ENCODE measurements at regions of chr20 and their contacts with region 1.

Region 1: GRCh38 chr20:62907384-62908317 is 18.7 kb downstream of the DIDO1 start:
- DNase-seq: peak; percentile 59 to 71 (median 70)
- H3K4me3 ChIP-seq: no peak overlapping the region
- H3K27ac ChIP-seq: no peak overlapping the region
- H3K4me1 ChIP-seq: no peaks in the 10 kb centered on the region
- H3K27me3 ChIP-seq: no peaks in the 10 kb centered on the region

Region 2: DNA sequence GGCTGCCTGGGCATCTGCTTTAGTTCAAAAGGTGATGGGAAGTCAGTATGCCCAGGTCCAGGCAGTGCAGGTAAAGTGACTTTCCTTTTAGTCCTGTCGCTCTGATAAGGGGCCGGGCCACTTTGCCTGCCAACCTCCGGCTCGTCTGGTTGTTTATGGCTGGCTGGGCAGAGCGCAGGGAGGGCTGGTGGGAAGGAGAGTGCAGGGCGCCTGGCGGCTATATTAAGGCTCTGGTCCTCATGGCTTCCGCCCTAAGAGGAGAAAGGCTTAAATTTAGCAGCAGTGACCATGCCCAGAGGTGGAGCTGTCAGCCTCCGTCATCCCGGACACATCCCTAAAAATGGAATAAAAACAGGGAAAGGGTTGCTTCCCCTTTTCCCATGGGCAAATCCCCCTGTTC is 446.5 kb before region 1 on chr20:
- CTCF ChIA-PET with region 1: no interaction called
- POLR2A ChIA-PET with region 1: no interaction called
- DNase-seq: no peak
- H3K4me3 ChIP-seq: no peak overlapping the region
- H3K27ac ChIP-seq: no peak overlapping the region
- H3K4me1 ChIP-seq: no peaks in the 10 kb centered on the region
- H3K27me3 ChIP-seq: peaks cover 0 to 31% (median 7%) of the 10 kb centered on the region in 5 experiments

Region 3: GRCh38 chr20:62921119-62921687 is 13.6 kb after region 1 on chr20:
- CTCF ChIA-PET with region 1: interaction called, 155 read pairs
- POLR2A ChIA-PET with region 1: interaction called, 5 read pairs
- DNase-seq: peak; percentile 71 to 84 (median 84)
- H3K4me3 ChIP-seq: no peak overlapping the region
- H3K27ac ChIP-seq: no peak overlapping the region
- H3K4me1 ChIP-seq: peaks cover 34 to 82% (median 75%) of the 10 kb centered on the region in 4 experiments
- H3K27me3 ChIP-seq: no peaks in the 10 kb centered on the region

Region 4: GRCh38 chr20:62964700-62965099 is 57.0 kb after region 1 on chr20:
- CTCF ChIA-PET with region 1: interaction called, 19 read pairs
- POLR2A ChIA-PET with region 1: no interaction called
- DNase-seq: peak in 2 of 3 donors; percentile 66
- H3K4me3 ChIP-seq: no peak overlapping the region
- H3K27ac ChIP-seq: no peak overlapping the region
- H3K4me1 ChIP-seq: peaks cover 0 to 39% (median 19%) of the 10 kb centered on the region in 4 experiments
- H3K27me3 ChIP-seq: no peaks in the 10 kb centered on the region

Measured in common myeloid progenitor, CD34-positive (primary cell).